A549 (cell line): ENCODE measurements at regions of chr2 and their contacts with region 1.

Region 1: GRCh38 chr2:235135990-235136561 is 184.3 kb downstream of the SH3BP4 start:
- DNase-seq: peak; percentile 78 to 90
- ATAC-seq: peak; percentile 97 to 99
- H3K4me3 ChIP-seq: no peak overlapping the region
- H3K27ac ChIP-seq: peak overlapping the region; percentile 47 to 57; a peak in 4 of 6 replicates
- H3K4me1 ChIP-seq: peaks cover 7% of the 10 kb centered on the region; the same call in 2 of the 3 replicates
- CTCF ChIP-seq: peak; percentile 81
- EP300 ChIP-seq: no peak
- POLR2A ChIP-seq: no peak
- RAD21 ChIP-seq: peak; percentile 92 to 95

Region 2: GRCh38 chr2:235149240-235149659 is 13.2 kb after region 1 on chr2:
- CTCF ChIA-PET with region 1: interaction called, 15 read pairs
- POLR2A ChIA-PET with region 1: no interaction called
- DNase-seq: no peak
- ATAC-seq: no peak
- H3K4me3 ChIP-seq: no peak overlapping the region
- H3K27ac ChIP-seq: no peak overlapping the region
- H3K4me1 ChIP-seq: no peaks in the 10 kb centered on the region
- CTCF ChIP-seq: no peak
- EP300 ChIP-seq: no peak
- POLR2A ChIP-seq: no peak
- RAD21 ChIP-seq: no peak

Region 3: DNA sequence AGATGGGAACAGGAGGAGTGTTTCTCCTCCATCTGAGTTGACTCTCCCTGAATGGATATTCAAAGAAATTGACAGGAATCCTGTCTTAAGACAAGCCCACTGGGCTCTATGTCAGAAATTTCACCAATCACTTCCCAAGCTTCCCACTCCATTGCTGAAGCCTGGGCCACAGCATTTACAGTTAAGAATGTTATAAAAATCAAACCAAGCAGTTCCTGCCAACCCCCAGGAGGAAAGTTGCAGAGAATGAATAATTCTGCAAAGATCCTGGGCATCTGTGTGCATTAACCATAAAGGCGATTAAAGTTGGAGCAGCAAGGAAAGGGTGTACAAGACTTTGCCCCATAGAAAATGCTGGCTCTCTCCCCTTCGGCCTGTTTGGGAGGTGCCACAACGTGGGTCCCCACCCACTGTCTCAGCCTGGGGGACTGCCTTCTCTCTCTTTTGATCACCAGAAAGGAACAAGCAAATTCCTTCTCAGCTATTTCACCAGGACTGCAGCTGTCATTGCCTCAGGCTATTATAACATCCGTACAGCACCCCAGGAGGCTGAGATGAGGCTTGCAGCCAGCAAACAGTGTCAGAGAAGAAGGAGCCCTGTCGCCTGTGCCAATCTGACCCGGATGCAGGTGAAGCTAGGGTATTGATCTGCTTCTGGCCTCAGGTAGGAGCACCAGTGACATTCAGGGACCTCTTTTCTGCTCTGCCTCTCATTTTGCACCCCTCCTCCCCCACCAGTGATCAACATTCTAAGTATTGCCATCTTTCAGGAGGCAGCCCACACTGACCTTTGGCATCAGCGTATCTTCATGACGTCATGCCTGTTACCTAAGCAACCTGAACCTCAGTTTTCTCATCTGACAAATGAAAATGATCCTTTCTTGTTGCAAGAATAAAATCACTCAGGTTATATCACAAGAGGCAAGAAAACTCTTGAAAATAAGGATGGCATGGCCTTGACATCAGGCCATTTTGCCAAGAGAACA is 34.8 kb after region 1 on chr2:
- CTCF ChIA-PET with region 1: no interaction called
- POLR2A ChIA-PET with region 1: no interaction called
- DNase-seq: peak; percentile 80 to 86
- ATAC-seq: peak; percentile 92 to 93
- H3K4me3 ChIP-seq: 0 out of 3 replicates have a peak overlapping the region, but pooled peaks have one; percentile 17
- H3K27ac ChIP-seq: peak overlapping the region; percentile 89 to 93
- H3K4me1 ChIP-seq: peaks cover 43% of the 10 kb centered on the region
- CTCF ChIP-seq: peak; percentile 9; the same call in 1 of the 3 replicates
- EP300 ChIP-seq: peak; percentile 45 to 48; a peak in 3 of 5 replicates
- POLR2A ChIP-seq: no peak
- RAD21 ChIP-seq: peak in 1 of 2 experiments; percentile 46; a peak in 1 of 5 replicates

Region 4: DNA sequence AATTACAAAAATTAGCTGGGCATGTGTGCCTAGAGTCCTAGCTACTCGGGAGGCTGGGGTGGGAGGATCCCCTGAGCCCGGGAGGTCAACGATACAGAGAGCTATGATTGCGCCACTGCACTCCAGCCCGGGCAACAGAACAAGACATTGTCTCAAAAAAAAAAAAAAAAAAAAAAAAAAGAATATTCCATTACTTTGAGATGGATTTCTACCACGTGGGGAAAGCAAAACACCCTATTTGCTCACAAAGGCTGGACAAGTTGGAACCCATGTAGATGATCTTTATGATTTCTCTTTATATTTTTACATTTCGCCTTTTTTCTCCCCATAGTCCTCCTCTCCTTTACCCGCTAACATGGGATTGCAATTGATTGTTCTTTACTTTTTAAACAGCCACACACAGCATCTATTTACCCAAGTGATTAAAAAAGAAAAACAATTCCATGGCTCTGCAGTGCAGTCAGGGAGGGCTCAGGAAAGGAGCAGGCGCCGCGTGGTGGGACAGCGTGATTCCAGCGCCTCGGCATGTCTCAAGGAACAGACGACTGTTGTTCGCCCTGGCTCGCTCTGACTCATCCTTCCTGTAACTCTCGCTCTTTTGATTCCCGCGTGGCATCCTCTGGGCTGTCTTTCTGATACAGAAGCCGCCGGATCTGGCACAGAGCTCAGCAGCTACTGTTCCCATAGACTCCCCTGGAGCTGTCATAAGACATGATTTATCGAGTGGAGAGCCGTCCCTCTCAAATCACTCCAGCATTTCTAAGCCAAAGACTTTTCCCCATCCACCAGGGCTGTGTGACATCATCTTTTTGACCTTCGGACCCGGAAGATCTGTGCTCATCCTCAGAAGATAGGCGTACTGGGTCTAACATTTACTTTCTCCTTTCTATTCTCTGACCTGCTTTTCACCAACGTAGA is 127.4 kb after region 1 on chr2:
- CTCF ChIA-PET with region 1: interaction called, 14 read pairs
- POLR2A ChIA-PET with region 1: no interaction called
- DNase-seq: peak; percentile 90 to 94
- ATAC-seq: peak; percentile 95 to 96
- H3K4me3 ChIP-seq: peak overlapping the region; percentile 22
- H3K27ac ChIP-seq: peak overlapping the region; percentile 86 to 88
- H3K4me1 ChIP-seq: peaks cover 43% of the 10 kb centered on the region
- CTCF ChIP-seq: peak; percentile 9; the same call in 1 of the 3 replicates
- EP300 ChIP-seq: peak; percentile 48 to 78; a peak in 3 of 5 replicates
- POLR2A ChIP-seq: no peak
- RAD21 ChIP-seq: peak in 1 of 2 experiments; percentile 55; a peak in 4 of 5 replicates

Region 5: GRCh38 chr2:235500761-235501672 is 364.9 kb after region 1 on chr2:
- CTCF ChIA-PET with region 1: interaction called, 10 read pairs
- POLR2A ChIA-PET with region 1: no interaction called
- DNase-seq: peak in 1 of 2 experiments; percentile 43
- ATAC-seq: peak; percentile 60 to 71; a peak in 4 of 6 replicates
- H3K4me3 ChIP-seq: no peak overlapping the region; the same call in 2 of the 3 replicates
- H3K27ac ChIP-seq: peak overlapping the region; percentile 57 to 77
- H3K4me1 ChIP-seq: peaks cover 73% of the 10 kb centered on the region
- CTCF ChIP-seq: no peak
- EP300 ChIP-seq: no peak
- POLR2A ChIP-seq: no peak
- RAD21 ChIP-seq: no peak

Region 6: DNA sequence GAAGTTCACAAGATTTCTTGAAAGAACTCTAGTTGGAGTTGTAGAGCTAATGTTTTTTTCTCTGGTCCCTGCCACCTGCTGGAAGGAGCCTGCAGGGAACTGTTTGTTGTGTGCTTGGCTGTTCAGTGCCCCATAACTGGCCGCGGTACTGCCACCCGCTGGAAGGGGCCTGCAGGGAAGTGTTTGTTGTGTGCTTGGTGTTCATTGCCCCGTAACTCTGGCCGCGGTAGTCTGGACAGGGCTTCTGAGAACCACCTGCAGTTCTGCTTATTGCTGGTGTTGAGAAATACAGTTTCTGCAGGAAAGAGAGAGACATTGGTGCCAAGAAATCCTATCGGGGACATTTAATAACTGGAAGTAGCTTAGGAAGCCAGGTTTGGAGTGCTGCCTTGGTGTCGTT is 415.9 kb after region 1 on chr2:
- CTCF ChIA-PET with region 1: interaction called, 21 read pairs
- POLR2A ChIA-PET with region 1: no interaction called
- DNase-seq: peak; percentile 70 to 78
- ATAC-seq: peak; percentile 96 to 97
- H3K4me3 ChIP-seq: no peak overlapping the region
- H3K27ac ChIP-seq: peak overlapping the region in 1 of 2 experiments; percentile 43; a peak in 1 of 6 replicates
- H3K4me1 ChIP-seq: peaks cover 27% of the 10 kb centered on the region
- CTCF ChIP-seq: peak; percentile 63
- EP300 ChIP-seq: no peak
- POLR2A ChIP-seq: no peak
- RAD21 ChIP-seq: peak; percentile 62 to 71